ENCODE measurements at regions of chr3 and their contacts with region 1.

Region 1: GRCh38 chr3:60775987-60776386 is 475.3 kb downstream of the FHIT start:
- DNase-seq: peak; percentile 56
- H3K4me3 Mint-ChIP-seq: no peak overlapping the region
- H3K27ac Mint-ChIP-seq: peak overlapping the region; percentile 40
- H3K4me1 Mint-ChIP-seq: peaks cover 23% of the 10 kb centered on the region
- H3K27me3 Mint-ChIP-seq: no peaks in the 10 kb centered on the region
- CTCF ChIP-seq: no peak

Region 2: DNA sequence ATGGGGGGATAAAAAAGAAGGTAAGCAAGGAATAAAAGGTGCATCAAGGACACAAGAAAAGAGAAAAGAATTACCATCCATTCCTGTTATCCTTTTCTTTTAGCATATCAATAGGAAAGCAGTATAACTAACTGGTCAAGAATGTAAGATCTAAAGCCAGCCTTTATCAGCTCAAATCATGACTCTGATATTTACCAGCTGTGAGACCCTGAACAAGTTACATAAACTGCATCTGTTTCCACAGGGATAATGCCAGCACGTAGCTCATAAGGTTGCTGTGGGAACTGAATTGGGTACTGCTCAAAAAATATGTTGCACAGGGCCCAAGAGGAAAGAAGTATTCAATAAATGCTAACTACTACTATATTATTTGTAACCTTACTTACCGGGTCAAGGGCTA is 634.0 kb before region 1 on chr3:
- CTCF ChIA-PET with region 1: no interaction called
- POLR2A ChIA-PET with region 1: no interaction called
- intact Hi-C with region 1: no loop called
- DNase-seq: no peak
- H3K4me3 Mint-ChIP-seq: no peak overlapping the region
- H3K27ac Mint-ChIP-seq: no peak overlapping the region
- H3K4me1 Mint-ChIP-seq: no peaks in the 10 kb centered on the region
- H3K27me3 Mint-ChIP-seq: no peaks in the 10 kb centered on the region
- CTCF ChIP-seq: no peak

Region 3: DNA sequence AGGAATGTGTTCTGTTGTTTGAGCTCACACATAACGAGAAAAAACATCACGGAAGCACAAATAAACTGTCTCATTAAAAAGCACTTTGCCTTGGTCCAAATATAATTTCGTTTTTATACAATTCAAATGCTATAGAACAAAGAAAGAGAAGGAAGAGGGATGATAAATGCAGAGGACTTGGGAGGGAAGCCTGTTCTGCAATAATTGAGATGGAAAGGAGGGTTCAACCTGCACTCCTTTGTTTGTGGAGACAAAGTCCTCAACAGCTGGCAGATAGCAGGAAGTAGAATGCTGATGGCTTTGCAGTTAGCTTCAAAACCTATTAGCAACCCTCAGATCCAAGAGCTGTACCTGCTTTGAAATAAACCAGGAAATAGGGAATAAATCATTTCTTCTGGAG is 535.5 kb before region 1 on chr3:
- CTCF ChIA-PET with region 1: no interaction called
- POLR2A ChIA-PET with region 1: no interaction called
- intact Hi-C with region 1: no loop called
- DNase-seq: no peak
- H3K4me3 Mint-ChIP-seq: no peak overlapping the region
- H3K27ac Mint-ChIP-seq: no peak overlapping the region
- H3K4me1 Mint-ChIP-seq: no peaks in the 10 kb centered on the region
- H3K27me3 Mint-ChIP-seq: no peaks in the 10 kb centered on the region
- CTCF ChIP-seq: no peak

Region 4: DNA sequence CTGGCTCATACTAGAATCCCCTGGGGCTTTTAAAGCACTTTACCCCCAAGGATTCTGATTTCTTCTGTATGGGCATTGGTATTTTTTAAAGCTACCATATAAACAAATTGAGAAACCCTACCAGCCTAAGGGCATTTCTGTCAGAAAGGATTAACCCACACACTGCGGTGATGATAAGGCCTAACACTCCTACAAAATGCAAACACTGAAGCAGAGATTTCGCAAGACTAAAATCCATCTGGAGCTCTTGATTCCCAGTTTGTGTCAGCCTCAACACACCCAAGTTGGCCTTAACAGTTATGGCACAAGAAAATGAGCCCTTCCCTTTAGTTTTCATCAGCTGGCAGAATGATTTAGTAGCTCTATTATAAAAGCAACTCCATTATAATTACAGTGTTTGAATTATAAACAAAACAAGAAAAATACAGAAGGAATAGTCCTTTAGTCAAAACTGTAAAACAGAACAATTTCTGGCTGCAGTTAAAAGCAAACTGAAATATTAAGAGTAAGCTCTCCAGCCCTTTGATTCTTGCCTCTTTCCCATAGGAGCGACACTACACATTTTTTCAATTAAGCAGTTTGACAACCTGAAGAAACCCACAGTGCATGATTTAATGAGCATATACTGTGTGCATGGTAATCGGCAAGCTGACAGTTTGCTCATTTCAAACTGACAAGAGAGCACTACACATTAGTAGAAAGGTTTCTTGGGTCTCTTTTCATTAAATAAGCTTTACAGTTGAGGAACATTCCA is 34.0 kb after region 1 on chr3:
- CTCF ChIA-PET with region 1: no interaction called
- POLR2A ChIA-PET with region 1: interaction called, 13 read pairs
- intact Hi-C with region 1: no loop called
- DNase-seq: peak; percentile 84
- H3K4me3 Mint-ChIP-seq: no peak overlapping the region
- H3K27ac Mint-ChIP-seq: peak overlapping the region; percentile 31
- H3K4me1 Mint-ChIP-seq: peaks cover 8% of the 10 kb centered on the region
- H3K27me3 Mint-ChIP-seq: no peaks in the 10 kb centered on the region
- CTCF ChIP-seq: no peak

Measured in MCF 10A (cell line).